ENCODE measurements at regions of chr17 and their contacts with region 1.

Region 1: GRCh38 chr17:73311781-73312641 is at the start of gene CDC42EP4:
- DNase-seq: peak; percentile 99
- H3K4me3 ChIP-seq: peak within 1 kb of the TSS; percentile 91 to 100 (median 100)
- H3K27ac ChIP-seq: peak within 1 kb of the TSS; percentile 99 to 100 (median 100)
- H3K4me1 ChIP-seq: peaks cover 0 to 43% (median 41%) of the 10 kb centered on the region in 4 donors
- H3K27me3 ChIP-seq: no peaks in the 10 kb centered on the region
- CTCF ChIP-seq: no peak
- EP300 ChIP-seq: peak in 1 of 4 donors; percentile 43
- POLR2A ChIP-seq: peak; percentile 97 to 98
- total RNA-seq, gene CDC42EP4: 68.1 to 87.6 (median 76.0) TPM

Region 2: DNA sequence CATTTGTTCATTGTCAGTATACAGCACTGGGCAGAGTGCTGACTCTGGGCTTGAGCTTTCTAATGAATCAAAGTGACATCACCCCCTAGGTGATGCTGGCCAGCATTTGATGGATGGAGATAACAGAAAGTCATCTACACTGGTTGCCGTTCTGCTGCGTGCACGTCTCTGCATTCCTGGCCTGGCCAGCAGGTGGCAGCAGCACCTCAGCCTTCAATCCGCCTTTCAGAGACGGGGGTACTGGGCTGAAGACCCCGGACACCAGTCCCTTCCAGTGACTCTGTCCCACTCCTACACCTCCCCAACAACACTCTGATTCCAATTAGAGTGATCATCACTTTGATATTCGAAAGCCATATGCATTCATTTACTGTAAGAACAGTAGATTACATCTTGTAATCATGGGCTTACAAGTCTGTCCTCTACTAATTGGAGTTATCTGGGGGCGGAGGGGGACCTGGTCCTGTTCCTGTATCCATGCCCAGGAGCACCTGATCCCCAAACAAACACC is 56.3 kb before region 1 on chr17:
- intact Hi-C with region 1: loop called (anchors 2 kb)
- DNase-seq: no peak
- H3K4me3 ChIP-seq: no peak overlapping the region
- H3K27ac ChIP-seq: peak overlapping the region in 2 of 4 donors; percentile 4 to 6
- H3K4me1 ChIP-seq: peaks cover 0 to 18% (median 13%) of the 10 kb centered on the region in 4 donors
- H3K27me3 ChIP-seq: no peaks in the 10 kb centered on the region
- CTCF ChIP-seq: peak; percentile 98 to 100 (median 98)
- EP300 ChIP-seq: no peak
- POLR2A ChIP-seq: no peak

Region 3: DNA sequence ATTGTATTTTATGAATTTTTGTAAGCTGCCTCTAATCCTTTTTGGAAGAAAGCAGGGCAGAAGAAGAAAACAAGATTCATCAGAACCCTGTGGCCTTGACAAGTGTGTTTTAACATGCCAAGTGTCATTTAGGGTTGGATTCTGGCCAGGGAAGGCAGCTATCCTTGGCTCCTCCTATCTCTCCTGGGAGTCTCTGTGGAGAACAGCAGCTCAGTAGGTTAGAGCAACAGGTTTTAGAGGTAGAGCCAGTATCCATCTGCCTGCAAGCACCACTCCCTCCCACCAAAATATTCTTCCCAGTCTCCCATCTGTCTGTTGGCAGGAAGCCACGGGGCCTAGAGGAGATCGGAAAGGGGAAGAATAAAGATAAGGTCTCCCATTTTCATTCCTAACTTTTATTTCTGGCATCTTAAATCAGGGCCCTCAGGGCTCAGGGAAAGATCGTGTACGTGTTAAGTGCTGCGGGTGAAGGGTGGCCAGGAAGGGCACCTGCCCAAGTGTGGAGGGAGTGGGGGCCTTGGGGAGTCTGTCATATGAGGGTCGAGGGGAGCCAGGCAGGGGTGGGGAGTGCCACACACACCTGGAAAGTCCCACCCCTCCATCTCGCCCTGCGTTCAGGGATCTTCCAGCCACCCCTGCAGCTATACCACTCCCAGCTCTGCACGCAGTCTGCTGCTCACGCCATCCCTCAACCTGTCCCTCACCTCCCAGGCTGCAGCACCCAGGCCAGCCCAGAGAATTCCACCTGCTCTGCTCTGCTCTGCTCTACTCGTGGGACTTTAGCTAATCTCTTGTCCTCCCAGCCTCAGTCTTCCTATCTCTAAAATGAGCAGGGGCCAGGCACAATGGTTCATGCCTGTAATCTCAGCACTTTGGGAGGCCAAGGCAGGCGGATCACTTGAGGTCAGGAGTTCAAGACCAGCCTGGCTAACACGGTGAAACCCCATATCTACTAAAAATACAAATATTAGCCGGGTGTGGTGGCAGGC is 33.3 kb before region 1 on chr17:
- intact Hi-C with region 1: loop called (anchors 5 kb)
- DNase-seq: peak; percentile 80
- H3K4me3 ChIP-seq: no peak overlapping the region
- H3K27ac ChIP-seq: peak overlapping the region; percentile 77 to 83 (median 80)
- H3K4me1 ChIP-seq: peaks cover 0 to 51% (median 42%) of the 10 kb centered on the region in 4 donors
- H3K27me3 ChIP-seq: no peaks in the 10 kb centered on the region
- CTCF ChIP-seq: no peak
- EP300 ChIP-seq: peak in 1 of 4 donors; percentile 5
- POLR2A ChIP-seq: no peak

Region 4: GRCh38 chr17:73342050-73342522 is 30.1 kb after region 1 on chr17:
- intact Hi-C with region 1: loop called (anchors 1 kb)
- DNase-seq: peak; percentile 98
- H3K4me3 ChIP-seq: peak overlapping the region in 1 of 4 donors; percentile 30
- H3K27ac ChIP-seq: peak overlapping the region; percentile 67 to 97 (median 96)
- H3K4me1 ChIP-seq: peaks cover 0 to 80% (median 67%) of the 10 kb centered on the region in 4 donors
- H3K27me3 ChIP-seq: no peaks in the 10 kb centered on the region
- CTCF ChIP-seq: no peak
- EP300 ChIP-seq: peak in 3 of 4 donors; percentile 11 to 69 (median 39)
- POLR2A ChIP-seq: no peak

Region 5: GRCh38 chr17:73357318-73357717 is 45.3 kb after region 1 on chr17:
- intact Hi-C with region 1: loop called (anchors 2 kb)
- DNase-seq: peak; percentile 92
- H3K4me3 ChIP-seq: no peak overlapping the region
- H3K27ac ChIP-seq: peak overlapping the region; percentile 57 to 87 (median 86)
- H3K4me1 ChIP-seq: peaks cover 0 to 56% (median 48%) of the 10 kb centered on the region in 4 donors
- H3K27me3 ChIP-seq: no peaks in the 10 kb centered on the region
- CTCF ChIP-seq: no peak
- EP300 ChIP-seq: peak in 2 of 4 donors; percentile 31 to 62
- POLR2A ChIP-seq: no peak

Measured in sigmoid colon (tissue), 7 donors.